T-cell (primary cell): ENCODE measurements at regions of chr4 and their contacts with region 1.

Region 1: GRCh38 chr4:21134994-21135393 is 434.7 kb downstream of the PACRGL start:
- DNase-seq: peak in 1 of 35 experiments; percentile 29
- ATAC-seq: no peak
- H3K4me3 ChIP-seq: no peak overlapping the region
- H3K4me3 Mint-ChIP-seq: no peak overlapping the region
- H3K27ac ChIP-seq: no peak overlapping the region
- H3K27ac Mint-ChIP-seq: no peak overlapping the region
- H3K4me1 ChIP-seq: no peaks in the 10 kb centered on the region
- H3K4me1 Mint-ChIP-seq: no peaks in the 10 kb centered on the region
- H3K27me3 ChIP-seq: no peaks in the 10 kb centered on the region
- H3K27me3 Mint-ChIP-seq: no peaks in the 10 kb centered on the region

Region 2: DNA sequence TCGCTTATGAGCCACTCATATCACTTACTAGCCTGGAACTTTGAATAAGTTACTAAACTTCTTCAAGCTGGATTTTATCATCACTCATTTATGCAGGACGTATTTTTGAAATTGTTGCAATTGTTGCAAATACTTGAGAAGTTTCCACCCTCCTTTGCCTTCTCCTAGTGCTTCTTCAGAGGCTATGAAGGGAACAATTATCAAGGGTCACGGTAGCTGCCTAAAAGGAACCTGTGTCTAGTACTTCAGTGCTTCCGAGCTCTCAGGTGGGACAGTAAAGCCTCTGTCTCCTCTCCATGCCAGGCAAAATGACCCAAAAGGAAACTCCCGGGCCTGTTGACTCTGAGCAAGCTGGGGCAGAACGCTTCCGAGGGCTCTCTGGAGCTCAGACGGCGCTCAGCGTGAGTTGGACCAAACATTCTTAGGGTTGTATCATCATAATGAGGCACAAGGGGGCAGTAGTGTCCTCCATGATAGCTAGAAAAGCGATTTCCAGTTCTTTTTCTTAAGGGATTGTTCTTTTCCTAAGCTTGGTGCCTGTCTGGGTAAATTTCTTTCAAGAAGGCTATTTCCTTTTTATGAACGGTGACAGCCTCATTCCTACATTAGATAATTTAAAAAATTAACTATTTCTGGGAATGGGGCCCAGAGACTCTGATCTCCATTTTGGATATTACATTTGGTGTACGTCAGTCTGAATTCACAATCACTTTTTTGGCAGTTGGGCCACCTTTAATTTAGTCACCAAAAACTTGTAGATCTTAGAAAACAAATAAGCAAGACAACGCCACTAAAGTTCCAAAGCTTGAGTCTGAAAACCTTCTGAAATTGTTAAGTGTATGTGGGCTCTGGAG is 361.6 kb before region 1 on chr4:
- CTCF ChIA-PET with region 1: interaction called in 1 of 2 experiments, 29 read pairs
- POLR2A ChIA-PET with region 1: no interaction called
- DNase-seq: peak in 15 of 35 experiments; percentile 0 to 55 (median 2)
- ATAC-seq: no peak
- H3K4me3 ChIP-seq: no peak overlapping the region
- H3K4me3 Mint-ChIP-seq: no peak overlapping the region
- H3K27ac ChIP-seq: no peak overlapping the region
- H3K27ac Mint-ChIP-seq: no peak overlapping the region
- H3K4me1 ChIP-seq: peaks cover 0 to 3% of the 10 kb centered on the region in 2 experiments
- H3K4me1 Mint-ChIP-seq: peaks cover 0 to 9% (median 3%) of the 10 kb centered on the region in 3 donors
- H3K27me3 ChIP-seq: peaks cover 0 to 2% of the 10 kb centered on the region in 2 experiments
- H3K27me3 Mint-ChIP-seq: peaks cover 0 to 7% of the 10 kb centered on the region in 2 donors

Region 3: GRCh38 chr4:20960291-20960690 is 174.7 kb before region 1 on chr4:
- CTCF ChIA-PET with region 1: no interaction called
- POLR2A ChIA-PET with region 1: no interaction called
- DNase-seq: no peak
- ATAC-seq: no peak
- H3K4me3 ChIP-seq: no peak overlapping the region
- H3K4me3 Mint-ChIP-seq: no peak overlapping the region
- H3K27ac ChIP-seq: no peak overlapping the region
- H3K27ac Mint-ChIP-seq: no peak overlapping the region
- H3K4me1 ChIP-seq: no peaks in the 10 kb centered on the region
- H3K4me1 Mint-ChIP-seq: peaks cover 0 to 2% (median 0%) of the 10 kb centered on the region in 3 donors
- H3K27me3 ChIP-seq: no peaks in the 10 kb centered on the region
- H3K27me3 Mint-ChIP-seq: no peaks in the 10 kb centered on the region

Region 4: GRCh38 chr4:22842360-22843018 is 1707.5 kb after region 1 on chr4:
- CTCF ChIA-PET with region 1: no interaction called
- POLR2A ChIA-PET with region 1: no interaction called
- DNase-seq: no peak
- ATAC-seq: no peak
- H3K4me3 ChIP-seq: no peak overlapping the region
- H3K4me3 Mint-ChIP-seq: no peak overlapping the region
- H3K27ac ChIP-seq: no peak overlapping the region
- H3K27ac Mint-ChIP-seq: no peak overlapping the region
- H3K4me1 ChIP-seq: no peaks in the 10 kb centered on the region
- H3K4me1 Mint-ChIP-seq: no peaks in the 10 kb centered on the region
- H3K27me3 ChIP-seq: no peaks in the 10 kb centered on the region
- H3K27me3 Mint-ChIP-seq: no peaks in the 10 kb centered on the region